A673 (cell line): ENCODE measurements at regions of chr20 and their contacts with region 1.

Region 1: GRCh38 chr20:324177-325044 is 941 bp upstream of the SOX12 start:
- DNase-seq: peak; percentile 93
- H3K4me3 ChIP-seq: peak overlapping the region; percentile 88
- H3K27ac ChIP-seq: peak overlapping the region; percentile 79
- H3K4me1 ChIP-seq: peaks cover 16% of the 10 kb centered on the region
- H3K27me3 ChIP-seq: no peaks in the 10 kb centered on the region
- CTCF ChIP-seq: peak; percentile 31; the same call in 1 of the 2 replicates

Region 2: DNA sequence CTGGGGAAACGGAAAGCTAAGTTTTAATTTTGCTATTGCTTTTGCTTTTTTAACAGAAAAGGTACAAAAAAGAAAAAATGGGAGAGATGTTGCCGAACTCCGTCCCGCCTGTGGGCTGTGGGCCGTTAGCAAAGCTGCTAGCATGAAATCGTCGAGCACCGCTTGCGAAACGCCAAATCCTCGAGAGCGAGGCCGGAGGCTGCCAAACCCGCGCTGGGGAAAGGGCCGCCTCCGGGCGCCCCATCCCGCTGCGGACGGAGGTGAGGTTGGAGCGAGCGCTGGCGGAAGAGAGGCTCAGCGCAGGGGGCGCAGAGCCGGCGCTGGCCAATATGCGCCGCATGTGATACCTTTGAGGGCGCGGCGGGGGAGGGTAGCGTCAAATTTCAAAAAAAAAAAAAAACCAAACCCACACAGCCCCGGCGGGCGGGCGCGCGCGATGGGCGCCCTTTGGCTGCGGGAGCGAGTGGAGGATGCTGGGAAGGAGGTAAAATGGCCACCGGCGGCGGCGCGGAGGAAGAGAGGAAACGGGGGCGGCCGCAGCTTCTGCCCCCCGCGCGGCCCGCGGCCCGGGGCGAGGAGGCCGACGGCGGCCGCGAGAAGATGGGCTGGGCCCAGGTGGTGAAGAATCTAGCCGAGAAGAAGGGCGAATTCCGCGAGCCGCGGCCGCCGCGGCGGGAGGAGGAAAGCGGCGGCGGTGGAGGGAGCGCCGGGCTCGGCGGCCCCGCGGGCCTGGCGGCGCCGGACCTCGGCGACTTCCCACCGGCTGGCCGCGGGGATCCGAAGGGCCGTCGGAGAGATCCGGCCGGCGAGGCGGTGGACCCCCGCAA is 27.1 kb before region 1 on chr20 and contains the start of gene ZCCHC3:
- CTCF ChIA-PET with region 1: no interaction called
- POLR2A ChIA-PET with region 1: no interaction called
- intact Hi-C with region 1: loop called (anchors 1 kb)
- DNase-seq: peak; percentile 96
- H3K4me3 ChIP-seq: peak within 1 kb of the TSS; percentile 88
- H3K27ac ChIP-seq: peak within 1 kb of the TSS; percentile 99
- H3K4me1 ChIP-seq: peaks cover 31% of the 10 kb centered on the region
- H3K27me3 ChIP-seq: no peaks in the 10 kb centered on the region
- CTCF ChIP-seq: no peak; the same call in 1 of the 2 replicates
- total RNA-seq, gene ZCCHC3: 38.0 and 39.6 TPM in 2 replicates

Region 3: GRCh38 chr20:309841-310644 is 14.4 kb before region 1 on chr20:
- CTCF ChIA-PET with region 1: interaction called, 4 read pairs
- POLR2A ChIA-PET with region 1: interaction called, 10 read pairs
- intact Hi-C with region 1: loop called (anchors 1 kb)
- DNase-seq: peak; percentile 100
- H3K4me3 ChIP-seq: peak overlapping the region; percentile 42
- H3K27ac ChIP-seq: peak overlapping the region; percentile 94
- H3K4me1 ChIP-seq: peaks cover 32% of the 10 kb centered on the region
- H3K27me3 ChIP-seq: no peaks in the 10 kb centered on the region
- CTCF ChIP-seq: no peak